HCT116 (cell line): ENCODE measurements at regions of chr12 and their contacts with region 1.

Region 1: DNA sequence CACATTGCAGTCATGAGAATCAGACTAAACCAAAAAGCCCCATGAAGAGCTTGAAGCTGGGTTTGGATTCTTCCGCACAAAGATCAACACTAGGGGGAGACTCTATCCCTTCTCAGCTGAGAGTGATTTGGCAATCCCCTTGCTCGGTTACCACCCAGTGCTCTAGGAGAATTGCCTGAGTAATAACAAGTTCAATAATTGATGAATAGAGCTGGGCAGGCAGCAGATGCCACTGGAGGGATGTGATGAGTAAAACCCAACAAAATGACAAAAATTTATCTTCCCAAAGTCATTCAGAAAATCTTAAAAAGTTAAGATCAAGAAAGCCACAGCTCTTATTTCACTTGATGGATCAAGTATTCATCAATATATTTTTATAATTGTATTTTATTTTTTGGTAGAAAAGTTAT is 185.6 kb upstream of the ARID2 start:
- DNase-seq: peak; percentile 80
- ATAC-seq: peak; percentile 96
- H3K4me3 ChIP-seq: no peak overlapping the region
- H3K27ac ChIP-seq: no peak overlapping the region
- H3K4me1 ChIP-seq: no peaks in the 10 kb centered on the region
- H3K27me3 ChIP-seq: no peaks in the 10 kb centered on the region
- CTCF ChIP-seq: peak; percentile 78 to 86 (median 81)
- POLR2A ChIP-seq: no peak
- RAD21 ChIP-seq: peak; percentile 83

Region 2: DNA sequence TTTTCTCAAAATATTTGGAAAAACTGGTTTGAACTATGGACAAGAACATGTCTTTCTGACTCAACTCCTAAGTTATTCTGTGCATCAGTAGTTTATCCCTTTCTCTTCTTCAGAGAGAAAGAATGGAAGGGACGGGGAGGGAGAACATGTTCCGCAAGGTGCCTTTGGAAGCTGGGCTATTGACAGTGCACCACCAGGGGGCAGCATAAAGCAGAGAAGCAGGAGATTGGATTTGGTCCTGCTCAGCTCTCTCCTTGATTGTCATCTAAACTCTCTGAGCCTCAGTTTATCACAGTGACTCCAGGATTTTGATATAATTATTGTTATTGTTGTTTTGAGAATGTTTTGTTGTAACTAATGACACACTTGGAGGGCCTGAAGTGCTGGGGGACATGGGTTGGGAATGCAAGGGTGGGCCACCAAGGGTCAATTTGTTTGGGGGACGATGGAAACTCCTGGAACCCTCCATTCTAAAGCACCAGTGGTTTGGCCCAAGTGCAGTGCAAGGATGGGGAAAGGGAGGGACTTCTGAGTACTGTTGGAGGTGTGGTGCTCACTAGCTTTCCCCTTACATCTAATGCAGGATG is 373.4 kb before region 1 on chr12:
- CTCF ChIA-PET with region 1: interaction called, 8 read pairs
- POLR2A ChIA-PET with region 1: no interaction called
- RAD21 ChIA-PET with region 1: interaction called in 1 of 2 experiments, 3 read pairs
- intact Hi-C with region 1: loop called (anchors 10 kb)
- DNase-seq: peak; percentile 62
- ATAC-seq: peak; percentile 87
- H3K4me3 ChIP-seq: no peak overlapping the region
- H3K27ac ChIP-seq: no peak overlapping the region
- H3K4me1 ChIP-seq: no peaks in the 10 kb centered on the region
- H3K27me3 ChIP-seq: no peaks in the 10 kb centered on the region
- CTCF ChIP-seq: peak; percentile 57 to 95 (median 90); a peak in 5 of 6 replicates
- POLR2A ChIP-seq: no peak
- RAD21 ChIP-seq: peak; percentile 84

Region 3: DNA sequence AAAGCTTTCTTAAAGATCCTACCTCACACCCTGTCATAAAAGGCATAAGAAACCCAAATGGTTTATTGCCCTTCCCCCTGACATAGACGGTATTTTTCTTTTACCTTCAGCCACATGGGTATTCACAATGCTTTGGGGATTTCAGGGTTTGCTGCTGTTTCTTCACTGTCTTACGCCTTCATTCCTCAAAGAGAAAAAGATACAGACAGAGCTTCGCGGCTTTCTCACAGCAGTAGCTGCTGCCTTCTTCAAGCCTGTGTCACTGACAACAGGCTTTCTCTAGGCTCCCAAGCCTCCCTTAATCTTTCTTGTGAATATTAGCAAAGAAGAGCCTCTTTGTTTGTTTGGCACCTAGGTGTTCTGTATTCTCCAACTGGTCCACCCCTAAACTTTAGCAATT is 11.8 kb before region 1 on chr12:
- CTCF ChIA-PET with region 1: interaction called, 21 read pairs
- POLR2A ChIA-PET with region 1: no interaction called
- RAD21 ChIA-PET with region 1: interaction called in 1 of 2 experiments, 3 read pairs
- intact Hi-C with region 1: no loop called
- DNase-seq: no peak
- ATAC-seq: no peak
- H3K4me3 ChIP-seq: no peak overlapping the region
- H3K27ac ChIP-seq: no peak overlapping the region
- H3K4me1 ChIP-seq: no peaks in the 10 kb centered on the region
- H3K27me3 ChIP-seq: no peaks in the 10 kb centered on the region
- CTCF ChIP-seq: no peak
- POLR2A ChIP-seq: no peak
- RAD21 ChIP-seq: no peak

Region 4: DNA sequence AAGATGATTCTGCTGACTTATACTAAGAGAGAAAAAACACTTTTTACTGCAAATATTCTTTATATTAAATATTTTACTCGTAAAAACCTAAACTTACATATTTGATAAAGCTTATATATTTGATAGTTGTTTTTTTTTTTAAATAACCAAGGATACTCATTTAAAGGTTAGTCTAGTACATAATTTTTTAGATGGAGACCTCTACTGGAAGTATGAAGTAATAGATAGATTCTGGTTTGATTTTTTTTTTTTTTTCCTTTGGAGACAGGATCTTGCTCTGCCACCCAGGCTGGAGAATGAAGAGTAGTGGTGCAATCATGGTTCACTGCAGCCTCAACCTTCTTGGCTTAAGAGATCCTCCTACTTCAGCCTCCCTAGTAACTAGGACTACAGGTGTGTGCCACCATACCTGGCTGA is 202.0 kb after region 1 on chr12:
- CTCF ChIA-PET with region 1: interaction called, 3 read pairs
- POLR2A ChIA-PET with region 1: no interaction called
- RAD21 ChIA-PET with region 1: no interaction called
- intact Hi-C with region 1: loop called (anchors 5 kb)
- DNase-seq: no peak
- ATAC-seq: peak; percentile 59
- H3K4me3 ChIP-seq: no peak overlapping the region
- H3K27ac ChIP-seq: no peak overlapping the region
- H3K4me1 ChIP-seq: peaks cover 0 to 3% of the 10 kb centered on the region in 2 experiments; a peak in 1 of 4 replicates
- H3K27me3 ChIP-seq: no peaks in the 10 kb centered on the region
- CTCF ChIP-seq: peak in 2 of 3 experiments; percentile 26 to 28; a peak in 3 of 6 replicates
- POLR2A ChIP-seq: no peak
- RAD21 ChIP-seq: no peak

Region 5: GRCh38 chr12:45878630-45879255 is 334.8 kb after region 1 on chr12:
- CTCF ChIA-PET with region 1: no interaction called
- POLR2A ChIA-PET with region 1: no interaction called
- RAD21 ChIA-PET with region 1: no interaction called
- intact Hi-C with region 1: no loop called
- DNase-seq: no peak
- ATAC-seq: no peak
- H3K4me3 ChIP-seq: no peak overlapping the region
- H3K27ac ChIP-seq: no peak overlapping the region
- H3K4me1 ChIP-seq: no peaks in the 10 kb centered on the region
- H3K27me3 ChIP-seq: no peaks in the 10 kb centered on the region
- CTCF ChIP-seq: no peak
- POLR2A ChIP-seq: no peak
- RAD21 ChIP-seq: no peak